ENCODE measurements at regions of chr15 and their contacts with region 1.

Region 1: GRCh38 chr15:29674661-29675533 is 147.4 kb downstream of the TJP1 start:
- DNase-seq: peak; percentile 94 to 96
- ATAC-seq: peak; percentile 66 to 84
- H3K4me3 ChIP-seq: peak overlapping the region; percentile 80
- H3K27ac ChIP-seq: peak overlapping the region; percentile 91 to 93
- H3K4me1 ChIP-seq: peaks cover 60% of the 10 kb centered on the region
- CTCF ChIP-seq: no peak
- EP300 ChIP-seq: peak in 1 of 2 experiments; percentile 38; a peak in 1 of 5 replicates
- POLR2A ChIP-seq: peak; percentile 83
- RAD21 ChIP-seq: no peak

Region 2: GRCh38 chr15:29685155-29686078 is 10.5 kb after region 1 on chr15:
- CTCF ChIA-PET with region 1: interaction called, 25 read pairs
- POLR2A ChIA-PET with region 1: interaction called, 4 read pairs
- DNase-seq: no peak
- ATAC-seq: no peak
- H3K4me3 ChIP-seq: no peak overlapping the region
- H3K27ac ChIP-seq: peak overlapping the region in 1 of 2 experiments; percentile 45; a peak in 3 of 6 replicates
- H3K4me1 ChIP-seq: peaks cover 30% of the 10 kb centered on the region
- CTCF ChIP-seq: no peak
- EP300 ChIP-seq: no peak
- POLR2A ChIP-seq: peak; percentile 5; the same call in 1 of the 2 replicates
- RAD21 ChIP-seq: no peak

Region 3: GRCh38 chr15:29692527-29692926 is 17.6 kb after region 1 on chr15:
- CTCF ChIA-PET with region 1: interaction called, 25 read pairs
- POLR2A ChIA-PET with region 1: no interaction called
- DNase-seq: peak in 1 of 2 experiments; percentile 64
- ATAC-seq: peak in 1 of 2 experiments; percentile 13; a peak in 2 of 6 replicates
- H3K4me3 ChIP-seq: no peak overlapping the region
- H3K27ac ChIP-seq: peak overlapping the region; percentile 47 to 72
- H3K4me1 ChIP-seq: peaks cover 65% of the 10 kb centered on the region
- CTCF ChIP-seq: peak; percentile 51
- EP300 ChIP-seq: no peak
- POLR2A ChIP-seq: no peak
- RAD21 ChIP-seq: peak; percentile 48 to 61; a peak in 4 of 5 replicates

Measured in A549 (cell line).